CD4-positive, alpha-beta memory T cell (primary cell): ENCODE measurements at regions of chr2 and their contacts with region 1.

Region 1: DNA sequence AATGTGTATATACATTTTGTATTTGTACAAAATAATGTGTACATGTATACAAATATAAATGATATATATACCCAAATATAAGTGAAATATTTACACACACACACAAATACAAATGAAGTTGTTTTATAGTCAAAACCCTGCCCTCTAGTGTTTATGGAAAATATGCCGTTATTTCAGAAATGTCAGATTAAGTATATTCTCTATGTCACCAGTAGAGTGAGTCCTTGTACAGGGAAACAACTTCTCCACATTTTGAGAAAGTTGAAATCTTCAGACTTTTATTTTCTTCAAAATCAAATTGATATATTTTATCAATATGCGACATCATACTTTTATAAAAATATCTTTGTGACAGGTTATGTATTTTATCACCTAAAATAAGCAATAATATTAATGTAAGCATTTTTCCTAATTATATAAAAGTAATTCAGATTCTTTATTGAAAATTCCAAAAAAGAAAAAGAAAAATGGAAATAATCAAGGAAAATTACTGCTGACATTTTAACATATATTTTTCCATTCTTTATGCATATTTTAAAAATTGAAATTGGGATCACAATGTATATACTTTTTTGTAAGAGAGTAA is 22.4 kb downstream of the ARL6IP6 start:
- DNase-seq: peak in 4 of 5 donors; percentile 43 to 52 (median 50)
- H3K4me3 ChIP-seq: no peak overlapping the region
- H3K4me3 Mint-ChIP-seq: no peak overlapping the region
- H3K27ac ChIP-seq: no peak overlapping the region
- H3K27ac Mint-ChIP-seq: no peak overlapping the region
- H3K4me1 ChIP-seq: no peaks in the 10 kb centered on the region
- H3K4me1 Mint-ChIP-seq: peaks cover 3 to 11% (median 6%) of the 10 kb centered on the region in 4 donors
- H3K27me3 ChIP-seq: no peaks in the 10 kb centered on the region
- H3K27me3 Mint-ChIP-seq: no peaks in the 10 kb centered on the region

Region 2: GRCh38 chr2:152036611-152037469 is 704.0 kb before region 1 on chr2:
- CTCF ChIA-PET with region 1: no interaction called
- POLR2A ChIA-PET with region 1: no interaction called
- intact Hi-C with region 1: loop called (anchors 1 kb)
- DNase-seq: peak in 4 of 5 donors; percentile 34 to 39 (median 37)
- H3K4me3 ChIP-seq: no peak overlapping the region
- H3K4me3 Mint-ChIP-seq: no peak overlapping the region
- H3K27ac ChIP-seq: no peak overlapping the region
- H3K27ac Mint-ChIP-seq: no peak overlapping the region
- H3K4me1 ChIP-seq: no peaks in the 10 kb centered on the region
- H3K4me1 Mint-ChIP-seq: no peaks in the 10 kb centered on the region
- H3K27me3 ChIP-seq: no peaks in the 10 kb centered on the region
- H3K27me3 Mint-ChIP-seq: peaks cover 0 to 2% of the 10 kb centered on the region in 2 donors

Region 3: GRCh38 chr2:152730591-152731303 is 10.1 kb before region 1 on chr2:
- CTCF ChIA-PET with region 1: interaction called, 15 read pairs
- POLR2A ChIA-PET with region 1: interaction called, 4 read pairs
- intact Hi-C with region 1: no loop called
- DNase-seq: peak; percentile 74 to 80 (median 75)
- H3K4me3 ChIP-seq: no peak overlapping the region
- H3K4me3 Mint-ChIP-seq: peak overlapping the region in 6 of 8 donors; percentile 17 to 69 (median 35)
- H3K27ac ChIP-seq: no peak overlapping the region
- H3K27ac Mint-ChIP-seq: peak overlapping the region in 5 of 7 donors; percentile 6 to 75 (median 57)
- H3K4me1 ChIP-seq: peaks cover 27% of the 10 kb centered on the region
- H3K4me1 Mint-ChIP-seq: peaks cover 20 to 38% (median 25%) of the 10 kb centered on the region in 4 donors
- H3K27me3 ChIP-seq: no peaks in the 10 kb centered on the region
- H3K27me3 Mint-ChIP-seq: no peaks in the 10 kb centered on the region